ENCODE measurements at regions of chr7 and their contacts with region 1.

Region 1: DNA sequence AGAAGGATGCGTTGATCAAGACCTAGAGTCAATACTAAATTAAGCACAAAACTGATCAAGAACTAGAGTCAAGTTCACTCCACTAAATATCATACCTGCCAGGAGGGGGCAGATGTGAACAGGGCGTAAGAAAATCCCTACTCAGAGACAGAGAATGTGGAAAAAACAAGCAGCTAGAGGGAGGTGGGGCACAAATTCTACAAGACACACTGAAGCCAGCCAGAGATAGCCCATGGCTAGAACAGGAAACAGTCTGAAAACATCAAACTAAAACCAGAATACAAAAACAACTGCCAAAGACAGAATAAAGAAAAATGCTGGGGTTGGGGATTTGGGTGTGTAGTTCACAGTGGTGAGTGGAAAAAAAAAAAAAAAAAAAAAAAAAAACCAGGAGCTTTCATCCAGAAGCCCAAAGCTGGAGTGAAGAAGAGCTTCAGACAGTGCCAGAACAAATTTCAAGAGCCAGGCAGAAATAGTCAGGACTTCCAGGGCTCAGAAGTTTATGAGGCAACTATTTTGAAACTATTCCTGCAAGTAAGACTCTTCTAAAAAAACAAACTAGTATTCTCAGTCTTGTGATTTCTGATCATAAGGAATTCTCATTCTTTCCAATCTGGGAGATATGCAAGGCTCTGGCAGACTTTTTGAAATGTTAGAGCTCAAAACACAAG is 118.3 kb downstream of the CCDC71L start:
- DNase-seq: peak in 1 of 2 donors; percentile 27
- ATAC-seq: peak; percentile 52 to 58
- H3K4me3 ChIP-seq: no peak overlapping the region
- H3K27ac ChIP-seq: peak overlapping the region in 3 of 4 donors; percentile 22 to 44 (median 33)
- H3K4me1 ChIP-seq: peaks cover 0 to 6% of the 10 kb centered on the region in 2 donors
- H3K27me3 ChIP-seq: no peaks in the 10 kb centered on the region
- CTCF ChIP-seq: peak in 3 of 5 experiments; percentile 34 to 53 (median 50)
- POLR2A ChIP-seq: no peak

Region 2: GRCh38 chr7:106736508-106737201 is 194.0 kb after region 1 on chr7:
- in situ Hi-C with region 1: loop called in 1 of 4 experiments (anchors 25 kb)
- intact Hi-C with region 1: loop called (anchors 2 kb)
- DNase-seq: no peak
- ATAC-seq: peak; percentile 39 to 70
- H3K4me3 ChIP-seq: no peak overlapping the region
- H3K27ac ChIP-seq: no peak overlapping the region
- H3K4me1 ChIP-seq: no peaks in the 10 kb centered on the region
- H3K27me3 ChIP-seq: no peaks in the 10 kb centered on the region
- CTCF ChIP-seq: peak in 3 of 5 experiments; percentile 37 to 50 (median 45)
- POLR2A ChIP-seq: no peak